MCF 10A (cell line): ENCODE measurements at regions of chr1 and their contacts with region 1.

Region 1: DNA sequence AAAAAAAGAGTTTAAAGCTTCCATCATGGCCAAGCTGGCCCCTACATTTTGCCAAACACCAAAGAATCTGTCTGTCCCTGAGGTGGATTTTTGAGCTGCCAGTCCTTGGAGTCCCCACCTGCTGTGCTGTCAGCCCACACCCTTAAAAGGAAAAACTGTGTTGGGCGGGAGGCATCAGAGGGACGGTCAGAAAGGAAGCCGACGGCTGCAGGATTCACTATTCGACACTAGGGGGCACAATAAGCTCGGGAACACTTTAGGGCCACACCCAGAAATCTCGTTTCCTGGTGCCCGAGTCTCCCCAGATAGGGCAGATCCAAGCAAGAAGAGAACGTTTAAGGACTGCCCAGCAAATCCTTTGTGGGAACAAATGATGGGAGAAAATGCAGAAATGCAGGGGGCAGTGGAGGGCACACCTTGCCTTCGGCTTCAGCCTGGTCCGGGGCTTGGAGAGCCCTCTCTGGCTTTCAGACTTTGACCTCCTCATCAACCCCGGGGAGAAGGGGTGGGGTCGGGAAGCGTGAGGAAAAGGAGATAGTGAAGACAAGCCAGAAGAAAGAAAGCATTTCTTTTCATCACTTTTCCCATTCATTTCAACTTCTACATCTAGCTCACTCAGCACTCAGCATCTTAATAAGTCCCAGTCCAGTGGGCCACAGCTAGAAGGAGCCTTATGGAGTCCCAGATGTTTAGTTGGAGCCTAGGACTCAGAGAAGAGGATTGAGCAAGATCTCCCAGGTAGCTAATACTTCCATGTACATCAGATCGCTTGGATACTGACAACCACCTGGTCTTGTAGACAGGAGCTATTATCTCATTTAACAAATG is 5.0 kb upstream of the CTTNBP2NL start:
- DNase-seq: peak; percentile 95
- H3K4me3 Mint-ChIP-seq: peak overlapping the region; percentile 75
- H3K27ac Mint-ChIP-seq: peak overlapping the region; percentile 11
- H3K4me1 Mint-ChIP-seq: peaks cover 33% of the 10 kb centered on the region
- H3K27me3 Mint-ChIP-seq: no peaks in the 10 kb centered on the region
- CTCF ChIP-seq: peak; percentile 75

Region 2: GRCh38 chr1:112418099-112418892 is 27.3 kb after region 1 on chr1:
- CTCF ChIA-PET with region 1: interaction called, 17 read pairs
- POLR2A ChIA-PET with region 1: interaction called, 4 read pairs
- intact Hi-C with region 1: no loop called
- DNase-seq: no peak
- H3K4me3 Mint-ChIP-seq: no peak overlapping the region
- H3K27ac Mint-ChIP-seq: no peak overlapping the region
- H3K4me1 Mint-ChIP-seq: no peaks in the 10 kb centered on the region
- H3K27me3 Mint-ChIP-seq: no peaks in the 10 kb centered on the region
- CTCF ChIP-seq: no peak

Region 3: DNA sequence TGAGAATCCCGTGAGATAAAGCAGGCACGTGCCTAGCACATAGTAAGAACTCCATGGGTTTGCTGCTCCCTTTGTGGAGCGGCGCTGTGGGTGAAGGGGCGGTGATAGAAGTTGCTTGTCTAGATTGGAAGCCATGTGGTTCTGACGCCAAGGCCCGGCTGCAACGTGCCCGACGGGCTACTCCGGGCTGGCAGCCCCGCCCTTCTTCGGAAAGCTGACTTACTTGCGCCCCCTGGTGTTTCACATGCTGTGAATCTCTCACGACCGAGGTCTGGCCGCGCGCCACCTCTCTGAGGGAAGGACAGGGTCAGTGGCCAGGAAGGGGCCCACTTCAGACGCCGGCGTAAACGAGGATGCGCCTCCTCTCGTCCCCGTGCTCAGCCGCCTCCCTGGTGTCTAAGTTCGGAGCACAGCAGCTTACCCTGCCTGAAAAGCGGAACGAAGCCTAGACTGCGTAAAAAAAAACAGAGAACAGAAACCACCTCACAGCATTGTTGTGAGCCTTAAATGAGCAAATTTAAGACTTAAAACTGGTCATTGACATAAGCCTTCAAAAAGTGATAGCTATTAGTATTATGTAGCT is 75.2 kb after region 1 on chr1:
- CTCF ChIA-PET with region 1: interaction called, 191 read pairs
- POLR2A ChIA-PET with region 1: interaction called, 25 read pairs
- intact Hi-C with region 1: loop called (anchors 1 kb)
- DNase-seq: peak; percentile 89
- H3K4me3 Mint-ChIP-seq: peak overlapping the region; percentile 67
- H3K27ac Mint-ChIP-seq: peak overlapping the region; percentile 87
- H3K4me1 Mint-ChIP-seq: peaks cover 15% of the 10 kb centered on the region
- H3K27me3 Mint-ChIP-seq: no peaks in the 10 kb centered on the region
- CTCF ChIP-seq: peak; percentile 76

Region 4: GRCh38 chr1:112614460-112615065 is 223.6 kb after region 1 on chr1:
- CTCF ChIA-PET with region 1: interaction called, 19 read pairs
- POLR2A ChIA-PET with region 1: interaction called, 57 read pairs
- intact Hi-C with region 1: loop called (anchors 1 kb)
- DNase-seq: peak; percentile 49
- H3K4me3 Mint-ChIP-seq: no peak overlapping the region
- H3K27ac Mint-ChIP-seq: no peak overlapping the region
- H3K4me1 Mint-ChIP-seq: peaks cover 6% of the 10 kb centered on the region
- H3K27me3 Mint-ChIP-seq: no peaks in the 10 kb centered on the region
- CTCF ChIP-seq: peak; percentile 55

Region 5: GRCh38 chr1:112706908-112707663 is 316.1 kb after region 1 on chr1 and contains the start of gene RHOC:
- CTCF ChIA-PET with region 1: interaction called, 48 read pairs
- POLR2A ChIA-PET with region 1: interaction called, 38 read pairs
- intact Hi-C with region 1: loop called (anchors 1 kb)
- DNase-seq: peak; percentile 91
- H3K4me3 Mint-ChIP-seq: peak within 1 kb of the TSS; percentile 78
- H3K27ac Mint-ChIP-seq: peak within 1 kb of the TSS; percentile 91
- H3K4me1 Mint-ChIP-seq: peaks cover 37% of the 10 kb centered on the region
- H3K27me3 Mint-ChIP-seq: no peaks in the 10 kb centered on the region
- CTCF ChIP-seq: peak; percentile 86
- total RNA-seq, gene RHOC: 253 and 294 TPM in 2 replicates